Cardiac septum (tissue), 1 donor: ENCODE measurements at regions of chr5 and their contacts with region 1.

Region 1: GRCh38 chr5:151880324-151880723 is 44.3 kb downstream of the GLRA1 start:
- DNase-seq: no peak

Region 2: DNA sequence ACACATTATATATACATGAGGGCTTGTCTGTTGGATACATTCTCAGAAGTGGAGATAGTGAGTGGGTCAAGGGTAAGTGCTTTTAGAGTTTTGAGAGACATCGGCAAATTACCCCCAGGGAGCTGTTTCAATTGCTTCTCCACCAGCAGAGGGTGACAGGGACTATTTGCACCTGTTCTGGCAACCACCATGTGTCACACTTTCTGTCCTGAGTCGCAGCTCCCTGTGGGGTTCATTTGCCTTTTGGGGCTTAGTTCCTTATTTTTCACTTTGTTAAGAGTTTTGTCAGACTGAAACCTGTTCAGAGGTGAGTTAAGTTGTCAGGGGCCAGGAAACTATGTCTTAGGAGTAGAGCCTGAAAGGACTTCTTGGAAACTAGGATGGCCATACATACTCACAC is 453.1 kb before region 1 on chr5:
- intact Hi-C with region 1: no loop called
- DNase-seq: no peak

Region 3: GRCh38 chr5:151917904-151918303 is 37.6 kb after region 1 on chr5:
- intact Hi-C with region 1: loop called (anchors 5 kb)
- DNase-seq: no peak